Activated naive CD4-positive, alpha-beta T cell treated with anti-CD3 and anti-CD28 coated beads for 36 hours (primary cell): ENCODE measurements at regions of chr1 and their contacts with region 1.

Region 1: GRCh38 chr1:222455188-222455879 is 92.6 kb downstream of the HHIPL2 start:
- DNase-seq: peak; percentile 92
- H3K4me3 Mint-ChIP-seq: no peak overlapping the region
- H3K27ac Mint-ChIP-seq: no peak overlapping the region
- H3K4me1 Mint-ChIP-seq: peaks cover 18% of the 10 kb centered on the region
- H3K27me3 Mint-ChIP-seq: no peaks in the 10 kb centered on the region

Region 2: DNA sequence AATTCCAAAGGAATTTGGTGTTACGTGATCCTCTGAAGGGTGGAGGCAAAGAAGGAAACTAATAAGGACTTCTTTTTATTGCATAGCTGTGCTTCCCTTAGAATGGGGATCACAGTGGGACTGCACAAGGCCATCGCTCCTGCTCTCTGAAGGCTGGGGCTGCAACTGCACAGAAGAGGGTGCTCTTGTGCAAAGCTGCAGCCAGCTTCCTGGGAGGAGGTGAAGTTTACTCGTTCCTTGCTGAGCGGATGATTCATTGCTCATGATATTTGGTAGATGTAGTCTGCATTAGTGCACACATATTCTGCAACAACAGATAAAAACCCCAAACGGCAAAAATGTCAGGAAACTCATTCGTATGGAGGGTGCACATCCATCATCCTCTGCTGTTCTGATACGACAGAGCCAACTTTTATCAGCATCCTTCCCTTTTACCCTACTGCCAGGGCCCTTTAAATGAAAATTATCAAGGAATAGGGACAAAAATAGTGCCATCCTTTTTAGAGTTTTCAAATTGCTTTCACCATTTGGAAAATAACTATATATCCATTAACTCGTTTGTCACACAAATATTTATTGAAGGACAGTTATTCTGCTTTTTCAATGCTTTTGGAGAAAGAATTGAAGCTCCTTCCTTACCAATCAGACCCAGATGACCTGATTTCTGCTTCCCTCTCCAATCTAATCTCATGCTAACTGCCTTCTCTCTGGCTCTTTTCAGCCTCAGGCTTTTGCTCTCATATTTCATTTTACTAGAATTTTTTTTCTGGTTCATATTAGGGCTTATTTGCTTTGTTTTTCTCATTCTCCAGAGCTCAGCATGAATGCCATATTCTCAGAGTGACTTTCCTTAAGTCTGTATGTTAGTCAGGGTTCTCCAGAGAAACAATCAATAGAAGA is 977.0 kb before region 1 on chr1:
- CTCF ChIA-PET with region 1: interaction called, 6 read pairs
- intact Hi-C with region 1: loop called (anchors 1 kb)
- DNase-seq: peak; percentile 74
- H3K4me3 Mint-ChIP-seq: no peak overlapping the region
- H3K27ac Mint-ChIP-seq: no peak overlapping the region
- H3K4me1 Mint-ChIP-seq: peaks cover 2% of the 10 kb centered on the region
- H3K27me3 Mint-ChIP-seq: peaks cover 5% of the 10 kb centered on the region

Region 3: DNA sequence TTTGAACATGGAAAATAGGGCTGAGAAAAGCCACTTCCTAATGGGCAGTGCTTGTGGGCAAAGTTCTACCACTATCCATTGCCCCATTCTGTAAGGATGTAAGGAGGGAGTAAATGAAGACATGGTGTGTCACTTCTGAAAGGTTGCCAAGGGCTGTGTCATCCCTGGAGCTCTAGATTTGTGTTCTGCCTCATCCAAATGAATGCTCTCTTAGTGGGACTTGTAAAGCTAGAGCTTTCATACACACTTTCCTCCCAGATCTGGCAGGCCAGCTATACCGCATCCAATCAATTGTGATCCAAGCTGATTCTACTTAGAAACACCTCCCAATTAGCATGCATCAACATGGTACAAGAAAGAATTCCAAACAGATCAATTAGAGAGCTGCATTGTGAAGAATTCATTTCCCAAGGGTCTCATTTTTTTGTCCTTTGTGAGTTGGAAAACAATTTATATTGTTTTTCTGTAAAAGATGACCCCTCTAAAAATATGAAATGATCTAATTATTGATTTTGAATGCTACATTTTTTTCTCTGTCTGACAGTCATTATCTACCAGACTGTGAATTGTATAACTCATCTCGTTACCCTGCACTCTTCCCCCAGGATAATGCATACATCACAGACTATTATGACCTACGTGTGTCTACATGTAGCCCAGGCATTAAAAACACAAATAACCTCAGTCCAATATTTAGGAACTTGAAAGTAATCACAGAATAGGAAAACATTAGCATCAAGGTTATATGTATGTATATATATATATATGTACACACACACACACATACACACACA is 596.3 kb before region 1 on chr1:
- CTCF ChIA-PET with region 1: no interaction called
- intact Hi-C with region 1: loop called (anchors 5 kb)
- DNase-seq: no peak
- H3K4me3 Mint-ChIP-seq: no peak overlapping the region
- H3K27ac Mint-ChIP-seq: no peak overlapping the region
- H3K4me1 Mint-ChIP-seq: peaks cover 11% of the 10 kb centered on the region
- H3K27me3 Mint-ChIP-seq: no peaks in the 10 kb centered on the region

Region 4: DNA sequence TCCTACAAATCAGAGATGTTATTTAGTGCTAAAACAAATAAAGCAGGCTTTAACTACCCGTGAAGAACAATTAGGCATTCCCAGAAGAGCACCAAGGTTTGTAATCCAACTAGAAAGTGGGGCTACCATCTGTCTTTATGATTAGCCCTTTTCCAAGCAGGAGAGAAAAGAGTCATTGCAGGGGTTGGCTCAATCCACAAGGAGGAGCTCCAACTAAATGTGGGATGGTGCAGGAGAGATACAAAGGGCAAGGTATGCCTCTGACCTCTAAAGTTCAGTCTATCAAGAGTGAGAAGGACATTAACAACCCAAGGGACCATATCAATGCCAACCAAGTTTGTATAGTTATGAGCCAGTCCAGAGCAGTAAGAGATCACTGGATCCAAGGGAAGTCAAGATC is 330.7 kb before region 1 on chr1:
- CTCF ChIA-PET with region 1: interaction called, 13 read pairs
- intact Hi-C with region 1: no loop called
- DNase-seq: no peak
- H3K4me3 Mint-ChIP-seq: no peak overlapping the region
- H3K27ac Mint-ChIP-seq: no peak overlapping the region
- H3K4me1 Mint-ChIP-seq: no peaks in the 10 kb centered on the region
- H3K27me3 Mint-ChIP-seq: no peaks in the 10 kb centered on the region

Region 5: DNA sequence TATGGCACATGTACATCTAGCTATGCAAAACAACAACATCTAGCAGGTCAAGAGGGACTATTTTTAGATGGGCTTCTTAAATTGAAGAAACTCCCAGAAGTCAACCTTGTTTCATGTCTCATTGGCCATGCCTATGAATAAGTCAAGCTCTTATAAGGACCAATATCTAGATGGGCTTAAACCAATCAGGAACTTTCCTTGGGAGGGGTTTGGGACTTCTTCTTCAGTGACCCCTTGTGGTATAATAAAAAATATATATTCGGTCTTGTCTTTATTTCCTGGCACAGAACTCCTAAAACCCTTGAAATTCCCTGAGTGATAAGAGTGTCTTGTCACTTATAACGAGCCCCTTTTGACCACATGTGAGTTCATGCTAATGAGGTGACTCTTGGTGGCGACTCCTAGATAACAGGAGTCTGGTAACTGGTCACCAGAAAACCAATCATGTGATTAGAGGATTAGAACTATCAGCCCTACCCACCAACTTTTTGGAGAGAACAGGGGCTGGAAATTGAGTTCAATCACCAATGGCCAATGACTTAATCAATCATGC is 125.8 kb before region 1 on chr1:
- CTCF ChIA-PET with region 1: interaction called, 5 read pairs
- intact Hi-C with region 1: loop called (anchors 5 kb)
- DNase-seq: no peak
- H3K4me3 Mint-ChIP-seq: no peak overlapping the region
- H3K27ac Mint-ChIP-seq: no peak overlapping the region
- H3K4me1 Mint-ChIP-seq: peaks cover 6% of the 10 kb centered on the region
- H3K27me3 Mint-ChIP-seq: no peaks in the 10 kb centered on the region

Region 6: GRCh38 chr1:222441066-222441465 is 14.3 kb before region 1 on chr1:
- CTCF ChIA-PET with region 1: interaction called, 17 read pairs
- intact Hi-C with region 1: no loop called
- DNase-seq: no peak
- H3K4me3 Mint-ChIP-seq: no peak overlapping the region
- H3K27ac Mint-ChIP-seq: no peak overlapping the region
- H3K4me1 Mint-ChIP-seq: peaks cover 10% of the 10 kb centered on the region
- H3K27me3 Mint-ChIP-seq: no peaks in the 10 kb centered on the region

Region 7: GRCh38 chr1:222570837-222571236 is 115.5 kb after region 1 on chr1:
- CTCF ChIA-PET with region 1: no interaction called
- intact Hi-C with region 1: no loop called
- DNase-seq: no peak
- H3K4me3 Mint-ChIP-seq: no peak overlapping the region
- H3K27ac Mint-ChIP-seq: no peak overlapping the region
- H3K4me1 Mint-ChIP-seq: peaks cover 6% of the 10 kb centered on the region
- H3K27me3 Mint-ChIP-seq: no peaks in the 10 kb centered on the region

Region 8: DNA sequence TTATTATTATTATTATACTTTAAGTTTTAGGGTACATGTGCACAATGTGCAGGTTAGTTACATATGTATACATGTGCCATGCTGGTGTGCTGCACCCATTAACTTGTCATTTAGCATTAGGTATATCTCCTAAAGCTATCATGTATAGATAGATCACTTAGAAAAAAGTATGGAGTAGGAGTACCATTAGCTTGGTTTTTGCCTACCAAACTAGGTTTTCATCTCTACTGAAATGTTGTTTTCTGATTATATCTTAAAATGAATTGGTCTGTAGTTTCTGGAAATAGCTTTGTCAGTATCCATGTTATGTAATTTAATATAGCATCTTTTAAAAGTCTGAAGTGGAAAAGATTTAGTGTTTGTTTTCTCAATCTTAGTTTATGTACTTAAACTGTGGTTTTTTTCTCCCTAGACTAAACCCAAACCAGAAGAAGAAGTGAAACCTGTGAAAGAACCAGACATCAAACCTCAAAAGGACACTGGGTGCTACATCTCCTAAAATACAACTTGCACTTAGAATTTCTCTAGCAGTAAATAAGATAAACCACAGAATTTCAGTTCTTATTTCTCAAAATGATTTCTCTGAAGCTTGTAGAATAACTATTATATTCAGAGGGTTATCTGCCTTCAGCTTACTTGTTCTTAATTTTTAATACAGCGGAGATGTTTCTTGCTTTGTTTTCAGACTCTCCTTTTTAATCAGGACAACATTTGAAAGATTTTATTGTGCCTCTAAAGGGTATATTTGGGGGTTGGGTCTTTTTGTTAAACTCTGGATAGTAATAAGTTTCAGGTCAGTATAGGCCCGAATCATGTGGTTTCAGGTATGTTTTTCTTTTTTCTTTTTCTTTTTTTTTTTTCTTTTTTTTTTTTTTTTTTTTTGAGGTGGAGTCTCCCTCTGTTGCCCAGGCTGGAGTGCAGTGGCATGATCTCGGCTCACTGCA is 277.2 kb after region 1 on chr1:
- CTCF ChIA-PET with region 1: no interaction called
- intact Hi-C with region 1: no loop called
- DNase-seq: no peak
- H3K4me3 Mint-ChIP-seq: no peak overlapping the region
- H3K27ac Mint-ChIP-seq: peak overlapping the region; percentile 1
- H3K4me1 Mint-ChIP-seq: peaks cover 6% of the 10 kb centered on the region
- H3K27me3 Mint-ChIP-seq: no peaks in the 10 kb centered on the region